Dorsolateral prefrontal cortex (tissue), 120 donors: ENCODE measurements at regions of chr12 and their contacts with region 1.

Region 1: GRCh38 chr12:68610370-68611093 is at the start of gene RAP1B:
- DNase-seq: peak; percentile 77 to 96 (median 90)
- H3K4me3 ChIP-seq: peak within 1 kb of the TSS; percentile 57 to 94 (median 82)
- H3K27ac ChIP-seq: peak within 1 kb of the TSS; percentile 60 to 97 (median 89)
- H3K27me3 ChIP-seq: no peaks in the 10 kb centered on the region
- CTCF ChIP-seq: peak in 16 of 56 donors; percentile 2 to 34 (median 18)
- total RNA-seq, gene RAP1B: 39.9 to 92.7 (median 63.1) TPM

Region 2: DNA sequence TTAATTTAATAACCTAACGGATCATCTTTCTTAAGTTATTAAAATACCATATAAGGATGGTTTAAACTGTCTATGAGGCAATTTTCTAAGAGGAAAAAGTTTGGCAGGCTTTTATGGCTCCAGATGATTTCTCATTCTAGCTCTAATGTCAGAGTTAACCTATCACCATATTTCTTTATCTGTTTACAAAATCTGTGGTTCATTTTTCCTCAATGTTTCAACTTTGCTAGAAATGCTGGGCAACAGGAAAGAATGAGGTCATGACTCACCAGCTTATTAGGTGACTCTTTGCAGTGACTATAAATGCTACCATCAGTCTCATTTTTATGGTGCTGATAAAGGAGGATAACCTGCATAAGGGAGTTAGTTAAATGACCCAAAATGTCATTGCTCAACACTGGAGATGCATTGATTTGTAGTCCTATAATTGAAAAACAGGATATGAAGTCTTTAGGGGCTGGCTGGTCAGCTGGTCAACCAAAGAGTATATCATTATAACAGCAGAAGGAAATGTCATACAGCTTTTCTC is 45.1 kb before region 1 on chr12:
- intact Hi-C with region 1: no loop called
- DNase-seq: no peak
- H3K4me3 ChIP-seq: no peak overlapping the region
- H3K27ac ChIP-seq: no peak overlapping the region
- H3K27me3 ChIP-seq: no peaks in the 10 kb centered on the region
- CTCF ChIP-seq: no peak

Region 3: GRCh38 chr12:68686595-68687521 is 76.3 kb after region 1 on chr12 and contains the start of gene NUP107:
- intact Hi-C with region 1: loop called (anchors 1 to 5 kb)
- DNase-seq: peak; percentile 92 to 98 (median 94)
- H3K4me3 ChIP-seq: peak within 1 kb of the TSS; percentile 61 to 100 (median 93)
- H3K27ac ChIP-seq: peak within 1 kb of the TSS in 58 of 59 donors; percentile 38 to 93 (median 82)
- H3K27me3 ChIP-seq: no peaks in the 10 kb centered on the region
- CTCF ChIP-seq: peak in 46 of 56 donors; percentile 12 to 57 (median 34)
- total RNA-seq, gene NUP107: 15.0 to 41.1 (median 24.5) TPM